Activated T-helper 1 cell treated with anti-CD3 and anti-CD28 coated beads, Interleukin-12 subunit alpha, Interleukin-12 subunit beta, Interleukin-2, Interleukin-4 antibody, amounts not matched to agents 30 ng/mL and 10 ng/mL and 1 ng/mL, durations not matched to agents 14 hours and 24 hours and 36 hours (primary cell): ENCODE measurements at regions of chrX and their contacts with region 1.

Region 1: GRCh38 chrX:77899081-77899828 is at the start of gene COX7B:
- DNase-seq: peak; percentile 65
- H3K4me3 Mint-ChIP-seq: peak within 1 kb of the TSS; percentile 95
- H3K27ac Mint-ChIP-seq: peak within 1 kb of the TSS; percentile 94
- H3K4me1 Mint-ChIP-seq: peaks cover 14% of the 10 kb centered on the region
- H3K27me3 Mint-ChIP-seq: peaks cover 2% of the 10 kb centered on the region
- total RNA-seq, gene COX7B: 272 and 286 TPM in 2 replicates

Region 2: GRCh38 chrX:76172325-76172893 is 1726.8 kb before region 1 on chrX:
- intact Hi-C with region 1: loop called (anchors 10 kb)
- DNase-seq: no peak
- H3K4me3 Mint-ChIP-seq: peak overlapping the region; percentile 94
- H3K27ac Mint-ChIP-seq: peak overlapping the region; percentile 98
- H3K4me1 Mint-ChIP-seq: peaks cover 38% of the 10 kb centered on the region
- H3K27me3 Mint-ChIP-seq: no peaks in the 10 kb centered on the region

Region 3: GRCh38 chrX:77640702-77641101 is 258.6 kb before region 1 on chrX:
- intact Hi-C with region 1: loop called (anchors 10 kb)
- DNase-seq: no peak
- H3K4me3 Mint-ChIP-seq: no peak overlapping the region
- H3K27ac Mint-ChIP-seq: no peak overlapping the region
- H3K4me1 Mint-ChIP-seq: peaks cover 5% of the 10 kb centered on the region
- H3K27me3 Mint-ChIP-seq: no peaks in the 10 kb centered on the region

Region 4: DNA sequence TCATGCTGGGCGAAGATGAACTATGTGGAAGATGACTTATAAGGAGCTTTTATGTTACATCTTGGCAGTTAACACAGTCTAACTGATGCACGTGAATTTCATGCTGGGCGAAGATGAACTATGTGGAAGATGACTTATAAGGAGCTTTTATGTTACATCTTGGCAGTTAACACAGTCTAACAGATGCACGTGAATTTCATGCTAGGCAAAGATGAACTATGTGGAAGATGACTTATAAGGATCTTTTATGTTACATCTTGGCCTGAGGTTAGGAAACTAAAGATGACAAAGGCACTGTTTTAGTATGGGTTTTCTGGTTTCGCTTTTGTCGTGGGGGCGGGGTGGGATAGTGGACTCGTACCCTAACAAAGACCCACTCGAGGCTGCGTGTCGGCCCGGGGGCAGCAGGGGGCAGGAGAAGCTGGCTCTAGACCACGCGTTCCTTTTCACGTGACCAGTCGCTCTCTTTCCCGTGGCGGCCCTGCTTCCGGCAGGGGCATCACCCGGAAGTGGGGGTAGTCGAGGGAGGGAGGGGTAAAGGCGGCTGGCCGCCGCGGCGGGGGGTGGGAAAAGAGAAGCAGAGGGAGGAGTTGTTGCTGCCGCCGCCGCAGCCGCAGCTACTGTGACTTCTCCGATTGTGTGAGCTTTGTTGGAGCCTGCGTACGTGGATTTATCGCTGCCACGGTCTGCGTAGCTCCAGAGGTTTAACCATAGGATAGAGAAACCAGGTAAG is 11.0 kb after region 1 on chrX and contains the start of gene ATP7A:
- intact Hi-C with region 1: loop called (anchors 1 kb)
- DNase-seq: peak; percentile 85
- H3K4me3 Mint-ChIP-seq: peak within 1 kb of the TSS; percentile 98
- H3K27ac Mint-ChIP-seq: peak within 1 kb of the TSS; percentile 97
- H3K4me1 Mint-ChIP-seq: peaks cover 16% of the 10 kb centered on the region
- H3K27me3 Mint-ChIP-seq: no peaks in the 10 kb centered on the region
- total RNA-seq, gene ATP7A: 6.1 and 6.9 TPM in 2 replicates

Region 5: GRCh38 chrX:78024349-78025108 is 125.3 kb after region 1 on chrX:
- intact Hi-C with region 1: loop called (anchors 2 kb)
- DNase-seq: no peak
- H3K4me3 Mint-ChIP-seq: no peak overlapping the region
- H3K27ac Mint-ChIP-seq: no peak overlapping the region
- H3K4me1 Mint-ChIP-seq: no peaks in the 10 kb centered on the region
- H3K27me3 Mint-ChIP-seq: no peaks in the 10 kb centered on the region